ENCODE measurements at regions of chr14 and their contacts with region 1.

Region 1: GRCh38 chr14:32576088-32576795 is 247.1 kb downstream of the AKAP6 start:
- DNase-seq: peak; percentile 35
- H3K4me3 Mint-ChIP-seq: no peak overlapping the region
- H3K27ac Mint-ChIP-seq: no peak overlapping the region
- H3K4me1 Mint-ChIP-seq: no peaks in the 10 kb centered on the region
- H3K27me3 Mint-ChIP-seq: no peaks in the 10 kb centered on the region

Region 2: GRCh38 chr14:32524609-32525375 is 51.5 kb before region 1 on chr14:
- CTCF ChIA-PET with region 1: no interaction called
- POLR2A ChIA-PET with region 1: no interaction called
- intact Hi-C with region 1: no loop called
- DNase-seq: no peak
- H3K4me3 Mint-ChIP-seq: no peak overlapping the region
- H3K27ac Mint-ChIP-seq: no peak overlapping the region
- H3K4me1 Mint-ChIP-seq: no peaks in the 10 kb centered on the region
- H3K27me3 Mint-ChIP-seq: no peaks in the 10 kb centered on the region

Region 3: GRCh38 chr14:32702562-32702961 is 126.3 kb after region 1 on chr14:
- CTCF ChIA-PET with region 1: no interaction called
- POLR2A ChIA-PET with region 1: no interaction called
- intact Hi-C with region 1: loop called (anchors 10 kb)
- DNase-seq: peak; percentile 62
- H3K4me3 Mint-ChIP-seq: no peak overlapping the region
- H3K27ac Mint-ChIP-seq: peak overlapping the region; percentile 80
- H3K4me1 Mint-ChIP-seq: peaks cover 7% of the 10 kb centered on the region
- H3K27me3 Mint-ChIP-seq: no peaks in the 10 kb centered on the region

Region 4: GRCh38 chr14:32720927-32721326 is 144.7 kb after region 1 on chr14:
- CTCF ChIA-PET with region 1: no interaction called
- POLR2A ChIA-PET with region 1: no interaction called
- intact Hi-C with region 1: no loop called
- DNase-seq: no peak
- H3K4me3 Mint-ChIP-seq: no peak overlapping the region
- H3K27ac Mint-ChIP-seq: no peak overlapping the region
- H3K4me1 Mint-ChIP-seq: no peaks in the 10 kb centered on the region
- H3K27me3 Mint-ChIP-seq: no peaks in the 10 kb centered on the region

Region 5: GRCh38 chr14:33432407-33433023 is 856.3 kb after region 1 on chr14:
- CTCF ChIA-PET with region 1: no interaction called
- POLR2A ChIA-PET with region 1: no interaction called
- intact Hi-C with region 1: loop called (anchors 1 kb)
- DNase-seq: peak; percentile 10
- H3K4me3 Mint-ChIP-seq: no peak overlapping the region
- H3K27ac Mint-ChIP-seq: no peak overlapping the region
- H3K4me1 Mint-ChIP-seq: peaks cover 12% of the 10 kb centered on the region
- H3K27me3 Mint-ChIP-seq: no peaks in the 10 kb centered on the region

Region 6: DNA sequence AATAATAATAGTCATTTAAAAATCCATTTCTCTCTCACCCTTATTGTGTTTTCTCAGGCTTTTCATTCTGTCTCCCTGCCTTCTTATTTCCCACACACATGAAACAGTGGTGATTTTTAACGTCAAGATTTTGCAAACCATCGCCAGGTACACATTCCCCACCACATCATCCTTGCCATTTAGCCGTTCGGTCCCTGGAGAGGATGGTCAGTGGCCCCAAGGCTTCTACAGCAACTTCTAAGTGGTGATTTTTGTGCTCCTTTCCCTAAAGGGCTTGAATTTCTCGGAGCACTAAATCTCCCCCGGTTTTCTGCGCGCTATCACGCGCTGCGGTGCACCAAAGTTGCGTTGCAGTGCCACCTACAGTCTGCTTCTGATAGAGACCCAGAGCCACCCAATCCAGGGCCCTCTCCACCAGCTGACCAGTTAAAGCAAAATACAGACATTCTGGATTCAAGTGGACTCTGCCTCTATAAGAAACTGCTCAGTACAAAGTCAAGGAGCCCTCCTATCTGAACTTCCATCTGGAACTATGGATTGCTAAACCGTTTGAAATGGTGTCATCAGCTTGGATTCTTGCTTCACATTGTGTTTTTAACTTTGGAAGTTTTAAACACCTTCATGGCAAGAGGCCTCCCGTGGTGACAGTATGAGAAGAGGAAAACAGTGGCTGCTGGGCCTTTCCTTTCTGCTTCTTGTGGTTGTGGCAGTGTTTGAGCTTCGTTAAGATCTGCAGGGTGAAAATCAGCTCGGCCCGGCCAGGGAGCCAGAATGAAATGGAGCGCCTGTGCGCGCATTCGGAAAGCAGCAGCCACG is 1651.8 kb after region 1 on chr14:
- CTCF ChIA-PET with region 1: no interaction called
- POLR2A ChIA-PET with region 1: no interaction called
- intact Hi-C with region 1: loop called (anchors 5 kb)
- DNase-seq: peak; percentile 70
- H3K4me3 Mint-ChIP-seq: no peak overlapping the region
- H3K27ac Mint-ChIP-seq: no peak overlapping the region
- H3K4me1 Mint-ChIP-seq: peaks cover 6% of the 10 kb centered on the region
- H3K27me3 Mint-ChIP-seq: peaks cover 6% of the 10 kb centered on the region

Measured in activated CD4-positive, alpha-beta memory T cell treated with anti-CD3 and anti-CD28 coated beads for 36 hours (primary cell).